Activated CD8-positive, alpha-beta T cell treated with anti-CD3 and anti-CD28 coated beads, Interleukin-2, amount 10 ng/mL, durations not matched to agents 7 days and 5 days (primary cell): ENCODE measurements at regions of chr9 and their contacts with region 1.

Region 1: GRCh38 chr9:130701056-130702022 is 7.8 kb downstream of the EXOSC2 start:
- DNase-seq: peak; percentile 75
- ATAC-seq: peak; percentile 94
- H3K4me3 Mint-ChIP-seq: no peak overlapping the region
- H3K27ac Mint-ChIP-seq: no peak overlapping the region
- H3K4me1 Mint-ChIP-seq: peaks cover 30% of the 10 kb centered on the region
- H3K27me3 Mint-ChIP-seq: no peaks in the 10 kb centered on the region

Region 2: DNA sequence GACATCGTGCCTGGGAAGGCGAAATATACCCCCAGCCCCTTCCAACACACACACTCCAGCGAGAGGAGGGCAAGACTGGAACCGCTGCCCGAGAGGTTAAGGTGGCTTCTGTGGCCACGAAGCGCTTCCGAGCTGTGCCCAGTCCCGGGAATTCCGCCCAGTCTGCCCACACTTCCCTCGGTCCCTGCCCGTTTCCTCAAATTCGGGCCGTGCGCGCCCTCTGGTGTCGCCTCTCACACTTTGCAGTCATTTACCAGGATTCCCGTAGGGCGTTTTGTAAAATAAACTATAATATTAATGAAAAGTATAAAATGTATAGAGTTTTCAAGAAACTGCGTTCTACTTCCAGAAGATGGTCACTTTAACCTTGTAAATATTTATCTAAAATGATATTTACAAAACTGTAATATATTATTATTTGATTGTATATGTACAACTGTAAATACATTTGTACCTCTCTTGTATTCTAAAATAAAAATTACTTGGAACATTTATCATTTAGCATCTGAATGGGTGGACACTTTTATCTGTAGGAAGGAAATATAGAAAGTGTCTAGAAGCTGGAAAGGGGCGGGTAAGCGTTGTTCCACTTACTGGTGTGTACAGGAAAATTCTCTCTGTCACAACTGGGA is 18.7 kb before region 1 on chr9:
- CTCF ChIA-PET with region 1: interaction called, 19 read pairs
- POLR2A ChIA-PET with region 1: no interaction called
- DNase-seq: peak; percentile 66
- ATAC-seq: no peak
- H3K4me3 Mint-ChIP-seq: peak overlapping the region; percentile 74
- H3K27ac Mint-ChIP-seq: peak overlapping the region; percentile 66
- H3K4me1 Mint-ChIP-seq: peaks cover 6% of the 10 kb centered on the region
- H3K27me3 Mint-ChIP-seq: peaks cover 24% of the 10 kb centered on the region

Region 3: DNA sequence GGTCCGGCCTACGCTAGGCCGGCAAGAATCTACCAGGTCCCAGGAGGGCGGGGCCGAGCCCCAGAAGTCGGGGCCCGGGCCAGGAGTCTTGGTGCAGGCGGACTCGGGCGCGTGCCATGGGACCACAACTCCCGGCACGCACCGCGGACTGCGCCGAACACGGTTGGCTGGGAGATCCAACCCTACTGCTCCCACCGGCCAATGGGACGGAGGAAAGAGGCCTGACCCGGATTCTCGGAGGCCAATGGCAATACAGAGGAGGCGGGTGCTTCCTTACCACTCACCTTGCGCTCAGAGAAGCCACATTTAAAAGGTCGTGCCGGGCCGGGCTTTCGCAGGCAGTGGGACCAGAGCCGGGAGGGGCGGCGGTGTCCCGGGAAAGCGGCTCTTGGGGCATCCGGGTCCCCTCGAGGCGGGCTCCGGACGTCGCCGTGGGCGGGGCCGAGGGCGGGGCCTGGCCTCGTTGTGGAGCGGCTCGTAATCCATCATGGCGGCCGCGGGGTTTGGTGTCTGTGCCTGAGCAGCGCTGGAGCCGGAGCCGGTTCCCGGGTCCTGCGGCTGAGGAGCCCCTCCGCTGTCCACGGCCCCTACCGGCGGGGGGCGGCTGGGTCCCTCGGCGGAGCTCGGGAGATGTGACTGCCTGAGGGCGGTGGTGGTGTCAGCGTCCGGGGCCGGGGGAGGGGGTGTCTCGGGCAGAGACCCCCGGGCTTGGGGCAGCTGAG is 11.4 kb after region 1 on chr9:
- CTCF ChIA-PET with region 1: interaction called, 29 read pairs
- POLR2A ChIA-PET with region 1: interaction called, 3 read pairs
- DNase-seq: peak; percentile 97
- ATAC-seq: peak; percentile 99
- H3K4me3 Mint-ChIP-seq: peak overlapping the region; percentile 87
- H3K27ac Mint-ChIP-seq: peak overlapping the region; percentile 93
- H3K4me1 Mint-ChIP-seq: peaks cover 38% of the 10 kb centered on the region
- H3K27me3 Mint-ChIP-seq: no peaks in the 10 kb centered on the region

Region 4: GRCh38 chr9:130728721-130729120 is 27.4 kb after region 1 on chr9:
- CTCF ChIA-PET with region 1: interaction called, 10 read pairs
- POLR2A ChIA-PET with region 1: no interaction called
- DNase-seq: no peak
- ATAC-seq: no peak
- H3K4me3 Mint-ChIP-seq: no peak overlapping the region
- H3K27ac Mint-ChIP-seq: no peak overlapping the region
- H3K4me1 Mint-ChIP-seq: peaks cover 2% of the 10 kb centered on the region
- H3K27me3 Mint-ChIP-seq: no peaks in the 10 kb centered on the region

Region 5: GRCh38 chr9:130770679-130771442 is 69.5 kb after region 1 on chr9:
- CTCF ChIA-PET with region 1: interaction called, 12 read pairs
- POLR2A ChIA-PET with region 1: no interaction called
- DNase-seq: no peak
- ATAC-seq: peak; percentile 82
- H3K4me3 Mint-ChIP-seq: no peak overlapping the region
- H3K27ac Mint-ChIP-seq: no peak overlapping the region
- H3K4me1 Mint-ChIP-seq: peaks cover 23% of the 10 kb centered on the region
- H3K27me3 Mint-ChIP-seq: no peaks in the 10 kb centered on the region

Region 6: DNA sequence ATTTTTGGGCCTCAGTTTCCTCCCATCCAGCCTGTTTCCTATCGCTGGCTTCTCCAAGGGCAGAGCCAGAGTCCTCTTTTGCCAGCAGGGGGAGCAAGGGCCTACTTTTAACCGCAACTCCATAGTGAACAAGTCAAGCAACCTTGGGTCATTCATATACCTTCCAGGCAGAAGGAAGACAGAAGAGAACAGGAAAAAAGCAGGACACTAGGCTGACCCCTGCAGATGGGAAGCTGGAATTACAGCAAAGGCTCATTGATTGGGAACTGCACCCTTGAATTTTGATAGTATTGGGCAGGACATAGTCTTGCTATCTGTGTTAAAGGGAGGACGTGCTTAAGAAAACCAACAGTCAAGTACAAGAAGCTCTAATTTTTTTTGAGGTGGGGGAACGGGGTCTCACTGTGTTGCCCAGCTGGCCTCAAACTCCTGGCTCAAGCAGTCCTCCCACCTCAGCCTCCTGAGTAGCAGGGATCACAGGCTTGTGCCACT is 165.2 kb after region 1 on chr9:
- CTCF ChIA-PET with region 1: interaction called, 45 read pairs
- POLR2A ChIA-PET with region 1: no interaction called
- DNase-seq: peak; percentile 65
- ATAC-seq: peak; percentile 61
- H3K4me3 Mint-ChIP-seq: no peak overlapping the region
- H3K27ac Mint-ChIP-seq: no peak overlapping the region
- H3K4me1 Mint-ChIP-seq: no peaks in the 10 kb centered on the region
- H3K27me3 Mint-ChIP-seq: no peaks in the 10 kb centered on the region

Region 7: DNA sequence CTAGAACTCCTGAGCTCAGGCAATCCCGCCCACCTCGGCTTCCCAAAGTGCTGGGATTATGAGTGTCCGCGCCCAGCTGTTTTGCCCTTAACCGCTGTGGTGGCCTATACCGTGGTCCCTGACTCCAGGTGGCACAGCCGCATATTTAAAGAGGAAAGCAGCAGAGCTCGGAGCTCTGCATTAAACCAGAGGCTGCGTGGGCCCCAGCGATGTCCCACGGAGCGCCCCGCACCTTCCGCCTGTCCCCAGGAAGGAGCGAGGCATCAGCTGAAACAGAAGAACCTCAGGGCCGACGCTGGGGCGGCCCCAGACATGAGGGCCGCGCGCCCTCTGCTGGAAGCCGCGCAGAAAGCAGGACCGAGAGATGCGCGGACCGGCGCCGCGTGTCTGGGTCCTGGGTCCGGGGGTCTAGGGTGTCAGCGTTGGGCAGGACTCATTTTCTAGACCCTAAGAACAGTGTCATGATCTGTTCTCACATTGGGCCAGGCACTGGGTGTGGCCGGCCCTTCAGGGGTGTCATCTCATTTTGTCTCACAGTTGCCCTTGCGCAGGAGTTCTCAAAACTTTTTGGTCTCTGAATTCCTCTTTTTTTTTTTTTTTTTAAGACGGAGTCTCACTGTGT is 345.4 kb after region 1 on chr9:
- CTCF ChIA-PET with region 1: interaction called, 10 read pairs
- POLR2A ChIA-PET with region 1: no interaction called
- DNase-seq: peak; percentile 77
- ATAC-seq: peak; percentile 96
- H3K4me3 Mint-ChIP-seq: no peak overlapping the region
- H3K27ac Mint-ChIP-seq: no peak overlapping the region
- H3K4me1 Mint-ChIP-seq: peaks cover 4% of the 10 kb centered on the region
- H3K27me3 Mint-ChIP-seq: no peaks in the 10 kb centered on the region